ENCODE measurements at regions of chr6 and their contacts with region 1.

Region 1: GRCh38 chr6:84227434-84228197 is at the start of gene CEP162:
- DNase-seq: peak; percentile 79
- CTCF ChIP-seq: peak; percentile 35

Region 2: GRCh38 chr6:83574787-83575186 is 652.8 kb before region 1 on chr6:
- in situ Hi-C with region 1: no loop called
- DNase-seq: no peak
- CTCF ChIP-seq: no peak

Region 3: GRCh38 chr6:83615025-83615999 is 612.3 kb before region 1 on chr6:
- in situ Hi-C with region 1: loop called (anchors 25 kb)
- DNase-seq: peak; percentile 34
- CTCF ChIP-seq: peak; percentile 32